Left ventricle myocardium superior (tissue), 1 donor: ENCODE measurements at regions of chr4 and their contacts with region 1.

Region 1: GRCh38 chr4:93791570-93792195 is 36.9 kb upstream of the ATOH1 start:
- DNase-seq: no peak
- ATAC-seq: peak; percentile 59

Region 2: DNA sequence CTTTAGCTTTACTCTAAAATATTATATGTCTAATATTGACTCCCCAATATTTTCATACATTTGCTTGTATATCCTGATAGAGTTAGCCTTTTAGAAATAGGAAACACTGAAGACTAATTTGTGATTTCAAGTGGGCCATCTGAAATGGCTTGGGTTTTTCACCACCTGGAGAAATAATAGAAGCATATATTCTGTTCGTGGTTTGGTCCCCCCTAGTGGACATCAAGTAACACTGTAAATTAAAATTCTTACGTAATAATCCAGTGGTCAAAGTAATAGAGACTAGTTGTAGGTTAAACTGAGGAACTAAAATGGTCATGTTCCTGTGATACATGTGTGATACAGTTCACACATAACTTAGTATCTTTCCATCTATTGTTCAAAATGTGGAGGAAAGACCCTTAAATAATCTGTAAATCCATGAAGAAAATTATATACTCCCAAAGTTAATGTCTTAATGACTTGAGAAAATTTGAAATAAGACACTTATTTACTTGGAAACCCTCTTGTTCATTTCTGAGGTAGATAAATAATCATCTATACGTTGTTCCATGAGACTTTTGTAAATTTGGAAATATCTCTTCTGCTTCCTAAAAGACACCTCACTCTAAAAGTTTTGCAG is 336.1 kb after region 1 on chr4:
- intact Hi-C with region 1: loop called (anchors 10 kb)
- DNase-seq: no peak
- ATAC-seq: no peak